Breast epithelium (tissue), 4 donors: ENCODE measurements at regions of chr5 and their contacts with region 1.

Region 1: DNA sequence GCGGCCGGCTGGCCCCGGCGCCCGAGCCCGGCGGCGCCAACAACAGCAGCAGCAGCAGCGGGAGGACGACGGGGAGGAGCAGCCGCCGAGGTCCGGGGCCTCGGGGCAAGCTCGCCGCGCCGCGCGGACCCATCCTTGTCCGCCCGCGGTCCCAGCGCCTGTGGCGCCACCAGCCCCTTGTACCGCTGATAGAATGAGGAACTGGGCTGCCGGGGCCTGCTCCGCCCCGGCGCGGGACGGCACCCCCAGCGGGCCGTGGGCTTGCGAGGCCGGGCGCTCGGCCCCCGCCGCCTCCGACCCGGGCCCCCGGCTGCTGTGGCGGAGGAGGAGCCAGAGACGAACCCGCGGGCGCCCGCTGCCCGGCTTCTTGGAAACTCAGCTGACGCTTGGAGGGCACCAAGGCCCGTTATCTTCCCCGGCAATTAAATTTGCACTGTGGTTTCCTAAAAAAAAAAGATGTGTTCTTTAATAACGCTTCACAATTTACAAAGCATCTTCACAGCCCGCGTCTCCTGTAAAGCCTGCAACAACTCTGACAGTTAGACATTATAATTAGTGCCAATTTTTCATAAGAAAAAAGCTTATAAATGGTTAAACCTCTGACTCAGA is at the start of gene ARSB:
- DNase-seq: no peak
- H3K4me3 ChIP-seq: peak within 1 kb of the TSS; percentile 84 to 89 (median 88)
- H3K27ac ChIP-seq: peak within 1 kb of the TSS; percentile 88 to 98
- H3K4me1 ChIP-seq: no peaks in the 10 kb centered on the region
- H3K27me3 ChIP-seq: no peaks in the 10 kb centered on the region
- CTCF ChIP-seq: no peak
- POLR2A ChIP-seq: no peak
- total RNA-seq, gene ARSB: 9.8 to 17.6 (median 10.0) TPM

Region 2: DNA sequence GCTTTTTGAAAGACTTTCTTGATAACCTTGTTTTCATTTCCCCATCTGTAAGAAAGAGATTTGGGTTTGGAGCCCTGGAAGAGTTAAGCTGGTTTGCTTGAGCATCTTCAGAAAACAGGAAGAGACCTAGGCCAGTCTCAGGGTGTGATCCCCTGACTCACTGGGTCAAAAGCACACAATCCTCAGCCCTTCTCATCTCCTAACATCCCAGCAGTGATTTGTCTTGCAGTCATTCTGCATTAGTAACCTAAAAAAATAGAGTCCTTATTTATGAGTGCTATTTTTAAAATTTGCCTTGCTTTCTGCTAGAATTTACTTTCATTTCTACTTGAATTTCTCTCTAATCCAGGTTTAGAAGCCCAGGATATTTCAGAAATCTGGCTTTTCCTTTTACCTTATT is 16.3 kb after region 1 on chr5:
- intact Hi-C with region 1: loop called (anchors 1 kb)
- DNase-seq: no peak
- H3K4me3 ChIP-seq: no peak overlapping the region
- H3K27ac ChIP-seq: no peak overlapping the region
- H3K4me1 ChIP-seq: no peaks in the 10 kb centered on the region
- H3K27me3 ChIP-seq: no peaks in the 10 kb centered on the region
- CTCF ChIP-seq: no peak
- POLR2A ChIP-seq: no peak